ENCODE measurements at regions of chr7 and their contacts with region 1.

Region 1: DNA sequence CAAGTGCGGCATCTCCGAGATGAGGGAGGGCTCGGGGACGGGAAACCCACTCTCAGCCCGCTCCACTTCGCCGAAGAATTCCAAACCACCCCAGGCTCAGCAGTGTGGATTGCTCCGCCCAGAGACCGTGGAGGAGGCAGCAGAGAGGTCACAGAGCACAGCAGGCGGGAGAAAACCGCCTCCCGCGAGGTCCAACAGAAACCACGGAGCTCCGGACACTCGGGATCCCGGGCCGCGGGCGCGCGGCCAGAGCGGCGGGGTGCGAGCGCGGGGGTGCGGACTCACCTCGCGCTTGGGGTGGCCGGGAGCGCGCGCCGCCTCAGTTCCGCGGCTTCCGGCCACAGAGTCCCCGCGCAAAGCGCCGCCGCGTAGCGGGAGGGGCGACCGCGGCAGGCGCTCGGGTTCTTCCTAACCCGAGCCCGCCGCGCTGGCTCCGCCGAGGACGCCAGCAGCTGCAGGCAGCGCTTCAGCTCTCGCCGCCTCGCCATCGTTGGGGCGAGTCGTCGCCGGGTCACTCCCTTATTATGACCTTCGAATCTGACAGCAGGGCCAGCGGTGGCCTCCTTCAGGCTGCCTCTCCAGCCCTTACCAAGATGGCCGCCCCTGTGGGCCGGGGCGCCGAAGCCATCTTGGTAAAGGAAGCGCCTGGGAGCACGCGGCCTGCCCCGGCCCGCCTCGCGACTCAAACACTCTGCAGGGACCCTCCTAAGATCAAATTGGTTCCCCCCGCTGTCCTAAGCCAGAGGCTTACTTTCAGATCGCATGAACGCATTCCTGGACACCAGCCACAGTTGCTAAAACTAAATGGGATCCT is at the start of gene NAPEPLD:
- DNase-seq: peak; percentile 84 to 98 (median 90)

Region 2: DNA sequence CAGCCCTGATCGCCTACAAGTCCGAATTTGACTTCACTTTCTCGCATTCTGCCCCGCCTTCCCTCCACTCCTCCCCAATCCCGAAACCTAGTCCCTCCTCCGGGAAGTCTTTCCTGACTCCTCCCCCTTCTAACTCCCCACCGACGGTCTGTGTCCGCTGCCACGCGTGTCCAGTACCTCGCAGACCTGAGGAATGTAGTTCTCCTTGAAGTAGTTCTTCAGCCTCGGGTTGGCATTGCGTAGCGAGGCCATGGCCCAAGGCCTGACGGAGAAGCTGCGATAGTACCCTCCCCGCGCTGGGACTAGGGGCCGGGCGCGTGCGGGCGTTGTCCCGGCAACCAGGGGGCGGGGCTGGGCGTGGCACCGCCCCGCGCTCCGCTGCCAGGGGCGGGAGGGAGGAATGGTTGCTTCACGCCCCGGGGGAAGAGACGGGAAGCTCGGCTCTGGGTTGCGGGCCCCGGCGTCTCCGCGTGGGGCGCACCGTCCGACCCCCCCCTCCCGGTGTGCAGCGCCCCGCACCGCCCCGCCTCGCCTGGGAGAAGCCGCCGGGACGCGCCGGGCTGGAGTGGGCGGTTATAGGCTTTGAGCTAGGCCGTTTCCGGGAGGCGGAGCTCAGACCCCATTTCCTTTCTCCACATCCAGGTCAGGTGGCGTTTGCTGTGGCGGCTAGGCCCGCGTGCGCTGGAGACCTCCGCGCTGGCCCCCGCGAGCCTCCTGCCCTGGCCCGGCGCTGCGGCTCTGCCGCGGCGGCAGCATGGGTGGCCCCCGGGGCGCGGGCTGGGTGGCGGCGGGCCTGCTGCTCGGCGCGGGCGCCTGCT is 74.5 kb before region 1 on chr7 and contains the starts of genes ARMC10 and FBXL13:
- intact Hi-C with region 1: loop called (anchors 5 kb)
- DNase-seq: peak; percentile 82 to 98 (median 88)

Measured in posterior cingulate gyrus (tissue), 11 donors.